Left cardiac atrium (tissue), 4 donors: ENCODE measurements at regions of chr11 and their contacts with region 1.

Region 1: DNA sequence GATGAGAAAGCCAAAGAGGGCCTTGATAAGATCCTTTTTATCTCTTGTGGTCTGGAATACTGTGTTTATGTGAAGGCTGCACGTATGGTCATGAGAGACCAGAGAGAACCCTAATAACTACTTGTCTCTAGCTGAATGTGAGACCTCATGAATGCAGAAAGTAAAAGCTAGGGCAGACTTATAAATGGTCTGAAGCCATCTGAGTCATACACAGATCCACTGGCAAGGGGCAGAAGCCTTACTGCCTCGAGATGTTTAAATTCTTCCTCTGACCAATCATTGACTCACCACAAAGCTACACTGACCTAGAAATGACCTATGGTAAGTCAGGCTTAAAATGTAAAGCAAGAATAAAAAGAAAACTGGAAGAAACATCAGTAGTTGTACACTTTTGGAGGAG is 22.7 kb upstream of the OR4B1 start:
- DNase-seq: no peak
- ATAC-seq: no peak

Region 2: DNA sequence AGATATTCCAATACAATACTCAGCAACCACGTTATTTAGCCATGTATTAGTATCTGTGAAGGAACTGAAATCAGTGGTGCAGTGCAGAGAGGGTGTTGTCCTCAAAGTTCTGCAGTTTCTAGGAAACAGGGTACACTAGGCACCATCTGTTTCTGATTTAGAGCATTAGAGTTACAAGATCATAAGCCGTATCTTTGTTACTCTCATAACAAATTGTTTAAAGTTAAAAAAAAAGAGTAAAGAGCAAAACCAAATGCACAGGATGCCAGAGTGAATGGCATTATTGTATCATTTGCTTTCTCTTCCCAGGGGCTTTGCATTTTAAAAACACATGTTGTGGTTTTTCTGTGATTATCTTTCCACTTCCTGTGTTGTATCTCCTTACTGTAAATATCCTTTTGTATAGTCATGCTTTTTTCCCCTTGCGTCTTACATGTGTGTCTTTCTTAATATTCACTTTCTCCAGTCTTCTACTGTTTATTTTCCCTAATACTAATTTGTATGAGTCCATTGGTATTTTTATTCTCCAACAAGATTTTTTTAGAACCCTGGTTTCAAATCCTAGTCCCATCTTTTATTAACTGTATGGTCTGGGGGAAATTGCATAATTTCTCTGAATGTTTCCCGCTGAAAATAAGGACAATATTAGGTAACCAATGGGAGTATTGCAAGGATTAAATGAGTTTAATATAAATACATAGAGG is 330.5 kb before region 1 on chr11:
- intact Hi-C with region 1: no loop called
- DNase-seq: no peak
- ATAC-seq: peak; percentile 47 to 50

Region 3: GRCh38 chr11:48244804-48245203 is 50.9 kb after region 1 on chr11 and contains the start of gene OR4X2:
- intact Hi-C with region 1: loop called in 1 of 2 experiments (anchors 5 kb)
- DNase-seq: no peak
- ATAC-seq: no peak
- total RNA-seq, gene OR4X2: not detected